ENCODE measurements at regions of chr2 and their contacts with region 1.

Region 1: DNA sequence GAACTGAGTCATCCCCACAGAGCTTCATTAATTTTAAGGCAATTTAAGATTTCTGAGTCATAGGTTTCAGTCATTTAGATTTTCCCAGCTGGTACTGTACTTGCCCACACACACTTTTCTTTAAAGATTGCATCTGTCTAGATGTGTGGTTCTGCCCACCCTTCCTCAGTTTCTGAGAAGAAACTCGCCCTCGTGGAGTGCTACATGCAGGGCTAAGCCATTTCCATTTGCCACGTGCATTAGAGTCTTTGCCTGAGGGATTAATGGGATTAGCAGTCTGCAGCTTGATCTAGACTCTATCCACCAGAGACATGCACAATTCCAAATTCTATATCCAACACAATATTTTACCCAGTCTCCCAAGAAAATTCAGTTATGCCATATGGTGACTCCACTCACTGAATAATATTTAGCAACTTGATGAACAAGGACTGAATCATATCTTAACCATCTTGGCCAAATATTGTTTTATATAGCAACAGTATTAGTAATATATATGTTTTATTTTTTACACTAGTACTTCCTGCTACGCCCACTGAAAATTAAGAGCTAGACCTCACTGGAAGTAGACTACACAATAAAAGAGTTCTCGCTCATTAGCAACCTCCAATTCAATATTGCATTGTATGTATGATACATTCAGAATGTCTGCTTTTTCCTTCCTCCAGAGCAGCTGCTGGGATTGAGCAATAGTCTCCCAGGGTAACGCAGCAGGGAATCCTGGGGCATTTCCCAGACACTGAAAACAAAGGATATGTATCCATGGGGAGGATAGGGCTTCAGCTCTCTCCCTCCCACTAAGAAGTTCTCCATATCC is 14.2 kb upstream of the TRIB2 start:
- DNase-seq: peak; percentile 93
- H3K4me3 ChIP-seq: no peak overlapping the region
- H3K27ac ChIP-seq: peak overlapping the region; percentile 32
- H3K4me1 ChIP-seq: peaks cover 12% of the 10 kb centered on the region
- H3K27me3 ChIP-seq: no peaks in the 10 kb centered on the region
- CTCF ChIP-seq: no peak
- POLR2A ChIP-seq: no peak

Region 2: GRCh38 chr2:11642974-11643373 is 1059.5 kb before region 1 on chr2:
- CTCF ChIA-PET with region 1: no interaction called
- POLR2A ChIA-PET with region 1: no interaction called
- dilution Hi-C with region 1: no loop called
- intact Hi-C with region 1: no loop called
- DNase-seq: no peak
- H3K4me3 ChIP-seq: no peak overlapping the region
- H3K27ac ChIP-seq: no peak overlapping the region
- H3K4me1 ChIP-seq: no peaks in the 10 kb centered on the region
- H3K27me3 ChIP-seq: peaks cover 0 to 2% of the 10 kb centered on the region in 2 experiments
- CTCF ChIP-seq: no peak
- POLR2A ChIP-seq: no peak

Region 3: DNA sequence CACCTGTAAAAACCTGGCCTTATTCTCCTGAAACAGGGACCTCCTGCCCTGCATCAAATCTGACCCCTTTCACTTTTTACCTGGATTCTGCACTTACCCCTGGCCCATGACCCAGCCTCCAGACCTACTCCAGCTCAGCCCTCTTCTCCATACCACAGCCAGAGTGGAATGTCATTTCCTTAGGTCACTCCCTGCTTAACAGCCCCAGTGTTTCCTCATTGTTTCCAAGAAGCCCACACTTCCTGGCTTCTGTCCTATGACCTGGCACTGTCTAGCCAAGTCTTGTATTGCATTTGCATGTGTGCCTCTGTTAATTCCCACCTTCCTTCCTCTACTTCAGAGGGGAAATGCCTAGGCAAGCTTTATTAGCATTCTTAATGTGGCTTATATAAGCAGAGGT is 37.2 kb before region 1 on chr2:
- CTCF ChIA-PET with region 1: no interaction called
- POLR2A ChIA-PET with region 1: no interaction called
- dilution Hi-C with region 1: no loop called
- intact Hi-C with region 1: loop called (anchors 1 kb)
- DNase-seq: peak; percentile 94
- H3K4me3 ChIP-seq: no peak overlapping the region
- H3K27ac ChIP-seq: peak overlapping the region; percentile 86
- H3K4me1 ChIP-seq: peaks cover 24% of the 10 kb centered on the region
- H3K27me3 ChIP-seq: no peaks in the 10 kb centered on the region
- CTCF ChIP-seq: no peak
- POLR2A ChIP-seq: no peak

Region 4: GRCh38 chr2:12683457-12684100 is 18.9 kb before region 1 on chr2:
- CTCF ChIA-PET with region 1: no interaction called
- POLR2A ChIA-PET with region 1: no interaction called
- dilution Hi-C with region 1: no loop called
- intact Hi-C with region 1: loop called (anchors 2 kb)
- DNase-seq: no peak
- H3K4me3 ChIP-seq: no peak overlapping the region
- H3K27ac ChIP-seq: no peak overlapping the region
- H3K4me1 ChIP-seq: no peaks in the 10 kb centered on the region
- H3K27me3 ChIP-seq: peaks cover 4 to 5% of the 10 kb centered on the region in 2 experiments
- CTCF ChIP-seq: no peak
- POLR2A ChIP-seq: no peak

Measured in endothelial cell of umbilical vein (primary cell).